Activated CD4-positive, alpha-beta memory T cell treated with anti-CD3 and anti-CD28 coated beads for 36 hours (primary cell): ENCODE measurements at regions of chr22 and their contacts with region 1.

Region 1: GRCh38 chr22:22558972-22559603 is at the start of gene PRAME:
- DNase-seq: peak; percentile 88
- H3K4me3 Mint-ChIP-seq: no peak within 1 kb of the TSS
- H3K27ac Mint-ChIP-seq: no peak within 1 kb of the TSS
- H3K4me1 Mint-ChIP-seq: peaks cover 4% of the 10 kb centered on the region
- H3K27me3 Mint-ChIP-seq: peaks cover 9% of the 10 kb centered on the region
- total RNA-seq, gene PRAME: not detected

Region 2: GRCh38 chr22:22587577-22588188 is 28.6 kb after region 1 on chr22:
- CTCF ChIA-PET with region 1: interaction called, 12 read pairs
- POLR2A ChIA-PET with region 1: no interaction called
- intact Hi-C with region 1: no loop called
- DNase-seq: no peak
- H3K4me3 Mint-ChIP-seq: no peak overlapping the region
- H3K27ac Mint-ChIP-seq: no peak overlapping the region
- H3K4me1 Mint-ChIP-seq: no peaks in the 10 kb centered on the region
- H3K27me3 Mint-ChIP-seq: peaks cover 19% of the 10 kb centered on the region